ENCODE measurements at regions of chrX and their contacts with region 1.

Region 1: DNA sequence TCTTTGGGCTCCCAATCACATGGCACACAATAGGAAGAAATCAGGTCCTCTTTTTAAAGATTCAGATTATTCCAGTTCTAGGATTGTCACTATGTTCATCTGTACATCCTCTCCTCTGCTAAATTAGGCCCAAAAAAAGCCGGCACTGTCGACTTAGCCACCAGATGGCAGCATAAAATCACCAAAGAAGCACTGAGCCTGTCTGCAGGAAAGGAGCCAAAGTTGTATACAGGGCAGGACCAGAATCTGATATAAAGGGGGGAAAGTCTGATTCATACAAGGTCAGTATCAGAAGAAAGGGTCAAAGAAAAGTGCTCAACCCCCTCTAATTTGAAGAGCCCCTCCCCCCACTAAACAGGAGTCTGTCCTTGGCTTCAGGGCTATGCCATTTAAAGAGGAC is 292.5 kb downstream of the CHIC1 start:
- DNase-seq: peak; percentile 15
- ATAC-seq: peak; percentile 31
- H3K4me3 Mint-ChIP-seq: no peak overlapping the region
- H3K27ac Mint-ChIP-seq: no peak overlapping the region
- H3K4me1 Mint-ChIP-seq: no peaks in the 10 kb centered on the region
- H3K27me3 Mint-ChIP-seq: no peaks in the 10 kb centered on the region
- CTCF ChIP-seq: no peak

Region 2: GRCh38 chrX:74015379-74016019 is 160.0 kb after region 1 on chrX:
- CTCF ChIA-PET with region 1: interaction called, 23 read pairs
- POLR2A ChIA-PET with region 1: no interaction called
- intact Hi-C with region 1: loop called (anchors 1 kb)
- DNase-seq: no peak
- ATAC-seq: peak; percentile 64
- H3K4me3 Mint-ChIP-seq: no peak overlapping the region
- H3K27ac Mint-ChIP-seq: no peak overlapping the region
- H3K4me1 Mint-ChIP-seq: no peaks in the 10 kb centered on the region
- H3K27me3 Mint-ChIP-seq: no peaks in the 10 kb centered on the region
- CTCF ChIP-seq: no peak

Region 3: GRCh38 chrX:74133156-74133796 is 277.7 kb after region 1 on chrX:
- CTCF ChIA-PET with region 1: interaction called, 9 read pairs
- POLR2A ChIA-PET with region 1: no interaction called
- intact Hi-C with region 1: loop called (anchors 1 kb)
- DNase-seq: no peak
- ATAC-seq: no peak
- H3K4me3 Mint-ChIP-seq: no peak overlapping the region
- H3K27ac Mint-ChIP-seq: no peak overlapping the region
- H3K4me1 Mint-ChIP-seq: no peaks in the 10 kb centered on the region
- H3K27me3 Mint-ChIP-seq: no peaks in the 10 kb centered on the region
- CTCF ChIP-seq: no peak

Region 4: DNA sequence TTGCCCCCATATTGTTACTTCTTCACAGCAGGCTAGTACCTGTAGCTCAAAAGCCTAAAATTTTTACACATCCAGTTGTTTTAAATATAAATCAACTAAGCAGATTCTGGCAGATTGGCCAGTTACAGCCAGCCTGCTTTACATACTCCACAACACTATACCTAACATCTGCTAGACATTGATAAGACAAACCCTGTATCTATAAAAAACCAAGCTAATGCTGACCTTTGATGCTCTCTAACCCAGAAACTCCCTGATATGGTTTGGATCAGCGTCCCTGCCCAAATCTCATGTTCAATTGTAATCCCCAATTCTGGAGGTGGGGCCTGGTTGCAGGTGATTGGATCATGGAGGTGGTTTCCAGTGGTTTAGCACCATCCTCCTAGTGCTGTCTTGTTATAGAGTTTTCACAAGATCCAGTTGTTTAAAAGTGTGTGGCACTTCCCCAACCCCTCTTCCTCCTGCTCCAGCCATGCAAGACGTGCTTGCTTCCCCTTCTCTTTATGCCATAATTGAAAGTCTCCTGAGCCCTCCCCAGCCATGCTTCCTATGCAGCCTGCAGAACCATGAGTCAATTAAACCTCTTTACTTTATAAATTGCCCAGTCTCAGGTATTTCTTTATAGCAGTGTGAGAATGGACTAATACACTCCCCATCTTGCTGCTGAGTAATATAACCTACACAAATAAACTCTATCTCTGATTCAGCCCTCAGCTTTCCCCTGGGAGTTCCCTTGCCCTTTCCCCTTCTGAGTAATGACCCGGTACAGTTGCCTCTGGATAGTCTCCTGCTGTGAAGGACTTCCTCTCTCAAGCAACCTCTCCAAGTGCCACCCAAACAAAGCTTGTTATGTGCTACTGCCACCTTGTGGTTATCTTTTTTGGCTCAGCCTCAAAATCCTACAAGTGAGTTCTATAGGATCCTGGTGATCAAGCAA is 488.1 kb after region 1 on chrX:
- CTCF ChIA-PET with region 1: interaction called, 6 read pairs
- POLR2A ChIA-PET with region 1: no interaction called
- intact Hi-C with region 1: loop called (anchors 1 kb)
- DNase-seq: no peak
- ATAC-seq: peak; percentile 70
- H3K4me3 Mint-ChIP-seq: no peak overlapping the region
- H3K27ac Mint-ChIP-seq: no peak overlapping the region
- H3K4me1 Mint-ChIP-seq: peaks cover 12% of the 10 kb centered on the region
- H3K27me3 Mint-ChIP-seq: peaks cover 3% of the 10 kb centered on the region
- CTCF ChIP-seq: no peak

Region 5: DNA sequence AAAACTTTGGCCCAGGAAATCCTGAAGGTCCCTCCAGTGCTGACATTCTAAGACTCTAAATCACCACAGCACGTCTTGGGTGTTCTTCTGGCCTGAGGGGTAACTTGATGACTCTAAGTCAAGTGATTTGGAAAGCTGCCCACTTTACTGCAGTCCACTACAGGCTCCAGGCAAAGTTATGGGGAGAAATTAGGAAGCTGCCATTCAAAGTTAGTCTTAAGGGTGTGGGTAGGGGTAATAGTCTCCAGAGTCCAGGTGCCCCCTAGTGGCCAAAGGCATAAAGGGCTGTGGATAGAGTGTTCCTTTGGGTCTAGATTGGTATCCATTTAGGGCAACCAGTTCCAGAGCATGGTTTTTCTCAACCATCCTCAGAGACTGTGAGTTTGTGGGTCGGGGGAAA is 527.1 kb after region 1 on chrX:
- CTCF ChIA-PET with region 1: no interaction called
- POLR2A ChIA-PET with region 1: no interaction called
- intact Hi-C with region 1: loop called (anchors 1 kb)
- DNase-seq: peak; percentile 13
- ATAC-seq: no peak
- H3K4me3 Mint-ChIP-seq: no peak overlapping the region
- H3K27ac Mint-ChIP-seq: no peak overlapping the region
- H3K4me1 Mint-ChIP-seq: no peaks in the 10 kb centered on the region
- H3K27me3 Mint-ChIP-seq: peaks cover 3% of the 10 kb centered on the region
- CTCF ChIP-seq: no peak

Measured in activated B cell treated with CpG ODN at 0.5 μM for 24 hours (primary cell).